WTC11 (cell line): ENCODE measurements at regions of chr14 and their contacts with region 1.

Region 1: GRCh38 chr14:39102969-39103957 is at the start of gene SEC23A:
- DNase-seq: peak; percentile 93
- ATAC-seq: peak; percentile 96
- H3K4me3 Mint-ChIP-seq: peak within 1 kb of the TSS; percentile 85
- H3K27ac Mint-ChIP-seq: peak within 1 kb of the TSS; percentile 98
- H3K4me1 Mint-ChIP-seq: peaks cover 18% of the 10 kb centered on the region
- H3K27me3 Mint-ChIP-seq: no peaks in the 10 kb centered on the region
- CTCF ChIP-seq: no peak
- total RNA-seq, gene SEC23A: 56.0 to 62.9 TPM (median 56.4 TPM) in 3 replicates

Region 2: DNA sequence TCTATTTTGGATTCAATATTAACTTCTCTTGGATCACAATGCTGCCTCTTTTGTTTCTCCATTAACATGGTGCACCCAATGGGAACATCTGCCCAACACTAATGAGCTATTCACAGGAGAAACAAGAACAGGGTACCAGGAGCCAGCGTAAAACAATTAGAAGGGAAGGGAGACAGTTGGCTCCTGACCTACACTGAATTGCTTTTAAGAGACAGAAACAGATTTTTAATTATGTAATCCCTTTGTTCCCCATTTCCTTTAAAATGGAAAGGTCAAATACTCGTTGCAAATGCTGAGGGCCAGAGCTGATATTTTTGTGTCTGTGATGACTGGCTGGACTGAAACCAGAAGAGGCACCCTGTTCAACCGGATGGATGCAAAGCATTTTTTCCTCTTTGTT is 108.5 kb before region 1 on chr14:
- CTCF ChIA-PET with region 1: no interaction called
- POLR2A ChIA-PET with region 1: interaction called, 11 read pairs
- DNase-seq: no peak
- ATAC-seq: no peak
- H3K4me3 Mint-ChIP-seq: no peak overlapping the region
- H3K27ac Mint-ChIP-seq: 0 out of 2 replicates have a peak overlapping the region, but pooled peaks have one; percentile 14
- H3K4me1 Mint-ChIP-seq: no peaks in the 10 kb centered on the region
- H3K27me3 Mint-ChIP-seq: no peaks in the 10 kb centered on the region; the same call in 1 of the 2 replicates
- CTCF ChIP-seq: no peak

Region 3: DNA sequence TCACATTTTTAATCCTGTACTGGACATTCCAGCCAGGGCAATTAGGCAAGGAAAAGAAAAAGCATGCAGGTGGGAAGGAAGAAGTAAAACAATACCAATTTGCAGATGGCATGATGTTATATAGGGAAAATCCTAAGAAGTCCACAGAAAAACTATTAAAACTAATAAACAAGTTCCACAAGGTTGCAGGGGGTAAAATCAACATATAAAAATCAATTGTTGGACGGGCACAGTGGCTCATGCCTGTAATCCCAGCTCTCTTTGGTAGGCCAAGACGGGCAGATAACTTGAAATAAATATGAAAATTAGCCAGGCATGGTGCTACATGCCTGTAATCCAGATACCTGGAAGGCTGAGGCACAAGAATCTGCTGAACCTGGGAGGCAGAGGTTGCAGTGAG is 32.2 kb before region 1 on chr14:
- CTCF ChIA-PET with region 1: no interaction called
- POLR2A ChIA-PET with region 1: no interaction called
- DNase-seq: no peak
- ATAC-seq: no peak
- H3K4me3 Mint-ChIP-seq: no peak overlapping the region
- H3K27ac Mint-ChIP-seq: no peak overlapping the region
- H3K4me1 Mint-ChIP-seq: no peaks in the 10 kb centered on the region
- H3K27me3 Mint-ChIP-seq: no peaks in the 10 kb centered on the region
- CTCF ChIP-seq: no peak

Region 4: GRCh38 chr14:39114073-39114838 is 11.0 kb after region 1 on chr14 and contains the start of gene GEMIN2:
- CTCF ChIA-PET with region 1: interaction called, 3 read pairs
- POLR2A ChIA-PET with region 1: interaction called, 11 read pairs
- DNase-seq: peak; percentile 89
- ATAC-seq: peak; percentile 96
- H3K4me3 Mint-ChIP-seq: peak within 1 kb of the TSS; percentile 95
- H3K27ac Mint-ChIP-seq: peak within 1 kb of the TSS; percentile 97
- H3K4me1 Mint-ChIP-seq: peaks cover 16% of the 10 kb centered on the region
- H3K27me3 Mint-ChIP-seq: no peaks in the 10 kb centered on the region
- CTCF ChIP-seq: no peak
- total RNA-seq, gene GEMIN2: 27.1 to 34.9 TPM (median 31.8 TPM) in 3 replicates

Region 5: DNA sequence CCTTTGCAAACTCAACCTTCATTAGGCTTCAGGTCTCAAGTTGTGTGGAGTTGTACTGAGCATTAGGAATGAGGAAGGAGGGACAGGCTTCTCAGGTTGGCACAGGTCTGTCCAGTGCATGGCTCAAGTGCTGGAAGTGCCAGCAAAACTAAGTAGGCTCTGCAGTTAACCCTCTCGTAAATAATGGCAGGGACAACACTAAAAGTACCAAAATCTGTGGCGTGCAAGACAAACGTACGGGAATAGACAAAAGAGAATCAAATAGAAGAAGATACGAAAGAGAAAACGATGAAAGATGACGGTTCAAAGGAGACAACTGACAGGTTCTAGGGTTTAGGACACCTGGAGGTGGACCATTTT is 66.3 kb after region 1 on chr14:
- CTCF ChIA-PET with region 1: interaction called, 8 read pairs
- POLR2A ChIA-PET with region 1: interaction called, 32 read pairs
- DNase-seq: no peak
- ATAC-seq: no peak
- H3K4me3 Mint-ChIP-seq: peak overlapping the region; percentile 89
- H3K27ac Mint-ChIP-seq: peak overlapping the region; percentile 92
- H3K4me1 Mint-ChIP-seq: peaks cover 26% of the 10 kb centered on the region
- H3K27me3 Mint-ChIP-seq: no peaks in the 10 kb centered on the region
- CTCF ChIP-seq: no peak

Region 6: DNA sequence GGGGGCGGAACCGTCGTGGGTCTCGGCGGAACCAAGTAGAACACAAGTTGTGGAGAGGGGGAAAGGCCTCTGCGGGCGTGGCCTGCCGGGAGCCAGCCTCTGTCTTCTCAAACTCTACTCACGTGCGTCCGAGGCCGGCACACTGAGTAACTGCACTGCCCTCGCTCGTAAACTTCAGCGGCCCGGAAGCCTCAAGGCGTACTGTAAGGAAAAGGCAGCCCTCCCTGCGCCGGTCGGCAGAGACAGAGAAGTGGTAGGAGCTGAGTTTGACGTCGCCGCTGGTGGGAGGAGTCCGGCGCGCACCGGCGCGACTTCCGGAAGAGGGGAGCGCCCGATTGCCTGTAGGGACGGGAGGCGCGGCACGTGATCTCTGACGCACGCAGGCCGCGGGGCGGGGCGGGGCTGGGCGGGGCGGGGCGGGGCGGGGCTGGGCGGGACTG is 328.9 kb after region 1 on chr14 and contains the start of gene FBXO33:
- CTCF ChIA-PET with region 1: interaction called, 4 read pairs
- POLR2A ChIA-PET with region 1: interaction called, 11 read pairs
- DNase-seq: peak; percentile 96
- ATAC-seq: peak; percentile 85
- H3K4me3 Mint-ChIP-seq: peak within 1 kb of the TSS; percentile 98
- H3K27ac Mint-ChIP-seq: peak within 1 kb of the TSS; percentile 100
- H3K4me1 Mint-ChIP-seq: peaks cover 23% of the 10 kb centered on the region
- H3K27me3 Mint-ChIP-seq: no peaks in the 10 kb centered on the region
- CTCF ChIP-seq: no peak
- total RNA-seq, gene FBXO33: 7.8 to 9.6 TPM (median 8.4 TPM) in 3 replicates